ENCODE measurements at regions of chr22 and their contacts with region 1.

Region 1: GRCh38 chr22:31272522-31273446 is 19.5 kb downstream of the PIK3IP1 start:
- DNase-seq: peak; percentile 76
- ATAC-seq: peak; percentile 79

Region 2: DNA sequence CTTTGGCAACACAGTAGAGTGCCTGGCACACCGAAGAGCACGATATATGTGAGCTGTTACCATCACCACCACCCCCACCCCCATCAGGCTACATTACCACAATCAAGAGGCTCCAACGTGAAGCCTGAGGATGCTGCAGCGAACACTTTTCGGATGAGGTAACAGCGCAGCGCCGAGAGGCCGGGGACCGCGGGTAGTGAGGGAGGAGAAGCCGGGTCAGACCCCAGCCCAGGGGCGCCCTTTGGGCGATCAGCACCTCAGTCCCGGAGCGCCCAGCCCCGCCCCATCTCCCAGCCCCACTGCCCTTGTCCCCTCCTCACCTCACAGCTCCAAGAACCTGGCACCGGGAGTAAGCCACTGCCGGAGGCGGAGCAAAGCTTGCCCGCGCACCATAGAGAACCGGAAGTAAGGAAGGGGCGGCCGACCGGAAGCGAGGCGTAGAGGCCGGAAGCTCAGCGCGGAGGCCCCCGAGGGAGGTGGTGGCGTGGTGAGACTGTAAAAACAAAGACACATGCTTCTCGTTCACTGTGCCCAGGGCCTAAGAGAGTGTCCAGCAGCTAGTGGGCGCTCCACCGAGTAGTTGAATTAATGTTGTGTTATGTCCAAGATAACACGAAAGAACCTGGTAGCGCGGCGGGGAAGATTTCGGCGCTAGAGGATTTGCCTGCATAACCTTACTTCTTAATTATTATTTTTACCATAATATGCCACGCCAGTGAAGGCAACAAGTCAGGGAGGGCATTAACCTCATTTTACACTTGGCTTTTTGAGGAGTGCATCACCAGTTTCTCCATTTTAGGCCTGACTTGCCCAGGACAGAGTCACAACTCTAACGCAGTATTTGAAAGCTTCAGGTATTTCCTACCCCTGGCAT is 1719.2 kb before region 1 on chr22 and contains the start of gene THOC5:
- intact Hi-C with region 1: no loop called
- DNase-seq: peak; percentile 96
- ATAC-seq: peak; percentile 98
- total RNA-seq, gene THOC5: 45.4 TPM

Region 3: DNA sequence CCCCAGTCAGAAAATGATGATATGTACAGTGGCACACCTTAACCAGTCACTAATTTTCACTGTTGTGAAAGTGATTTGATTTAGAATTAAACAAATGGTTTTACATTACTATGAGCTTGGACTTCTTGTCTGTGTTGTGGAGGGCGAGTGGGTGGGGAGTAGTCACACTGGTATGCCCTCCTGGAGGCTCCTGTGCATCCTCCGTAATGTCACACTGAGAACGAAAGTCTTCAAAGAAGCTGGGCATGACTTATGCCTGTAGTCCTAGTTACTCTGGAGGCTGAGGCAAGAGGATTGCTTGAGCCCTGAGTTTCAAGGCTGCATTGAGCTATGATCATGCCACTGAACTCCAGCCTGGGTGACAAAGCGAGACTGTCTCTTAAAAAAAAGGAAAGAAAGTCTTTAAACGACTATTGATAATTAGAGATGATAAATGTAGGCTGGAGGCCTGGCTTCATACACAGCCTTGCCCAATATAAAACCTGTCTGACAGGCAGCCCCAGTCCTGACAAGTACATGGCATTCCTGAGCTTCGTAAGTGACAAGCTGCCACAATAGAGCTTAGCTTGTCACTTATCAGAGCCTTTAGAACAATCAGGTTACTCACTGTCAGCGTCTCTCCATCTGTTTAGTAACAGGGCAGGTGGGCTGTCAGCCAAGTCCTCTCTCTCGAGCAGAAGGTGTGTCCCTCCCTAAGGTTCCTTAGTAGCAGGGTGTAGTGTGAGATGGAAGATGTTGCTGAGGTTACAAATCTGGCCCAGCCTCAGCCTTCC is 65.7 kb before region 1 on chr22:
- intact Hi-C with region 1: loop called (anchors 10 kb)
- DNase-seq: no peak
- ATAC-seq: no peak

Region 4: GRCh38 chr22:33070600-33070999 is 1797.8 kb after region 1 on chr22:
- intact Hi-C with region 1: no loop called
- DNase-seq: no peak
- ATAC-seq: no peak